ENCODE measurements at regions of chr2 and their contacts with region 1.

Region 1: GRCh38 chr2:191983186-191983585 is 136.3 kb upstream of the CAVIN2 start:
- DNase-seq: no peak
- ATAC-seq: no peak
- H3K4me3 ChIP-seq: no peak overlapping the region
- H3K27ac ChIP-seq: no peak overlapping the region
- H3K4me1 ChIP-seq: no peaks in the 10 kb centered on the region
- H3K27me3 ChIP-seq: no peaks in the 10 kb centered on the region; a peak in 1 of 4 replicates
- CTCF ChIP-seq: no peak
- EP300 ChIP-seq: no peak
- POLR2A ChIP-seq: no peak
- RAD21 ChIP-seq: no peak

Region 2: DNA sequence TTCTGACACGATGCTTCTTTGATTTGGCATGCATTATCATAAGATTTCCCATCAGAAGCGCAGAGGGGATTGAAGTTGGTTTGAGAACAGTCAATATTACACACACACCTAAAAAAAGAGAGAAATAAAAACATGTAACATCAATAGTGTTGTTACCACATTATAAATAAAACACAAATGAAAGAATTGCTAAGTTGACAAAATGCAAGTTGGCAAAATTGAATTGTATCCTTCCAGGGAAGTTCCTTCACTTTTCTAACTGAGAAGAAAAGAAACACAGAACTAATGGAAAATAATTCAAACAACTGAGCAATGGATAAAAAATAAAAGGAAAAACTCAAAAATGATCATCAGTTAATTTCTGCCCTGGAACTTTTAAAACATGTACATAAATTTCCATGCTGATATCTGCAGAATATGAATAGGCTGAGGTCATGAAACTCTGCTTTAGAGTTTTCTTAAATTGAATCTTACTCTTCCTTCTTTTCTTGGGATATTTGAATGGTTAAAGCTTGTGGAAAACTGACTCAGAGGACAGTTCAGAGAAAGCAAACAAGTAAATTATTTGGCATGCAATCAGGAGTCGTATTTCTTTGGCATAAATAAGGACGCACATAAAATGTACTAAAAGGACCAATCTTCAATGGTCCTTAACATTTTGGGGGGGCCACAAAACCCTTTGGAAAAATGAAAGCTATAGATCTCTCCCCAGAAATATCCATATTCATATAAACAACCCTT is 16.1 kb after region 1 on chr2:
- CTCF ChIA-PET with region 1: interaction called, 14 read pairs
- POLR2A ChIA-PET with region 1: no interaction called
- RAD21 ChIA-PET with region 1: interaction called, 5 read pairs
- SMC1A ChIA-PET with region 1: interaction called, 11 read pairs
- in situ Hi-C with region 1: no loop called
- intact Hi-C with region 1: no loop called
- DNase-seq: no peak
- ATAC-seq: no peak
- H3K4me3 ChIP-seq: no peak overlapping the region
- H3K27ac ChIP-seq: no peak overlapping the region
- H3K4me1 ChIP-seq: peaks cover 5% of the 10 kb centered on the region
- H3K27me3 ChIP-seq: no peaks in the 10 kb centered on the region
- CTCF ChIP-seq: no peak
- EP300 ChIP-seq: no peak
- POLR2A ChIP-seq: no peak
- RAD21 ChIP-seq: no peak

Region 3: GRCh38 chr2:192277494-192278109 is 294.4 kb after region 1 on chr2:
- CTCF ChIA-PET with region 1: no interaction called
- POLR2A ChIA-PET with region 1: no interaction called
- RAD21 ChIA-PET with region 1: no interaction called
- SMC1A ChIA-PET with region 1: no interaction called
- in situ Hi-C with region 1: no loop called
- intact Hi-C with region 1: no loop called
- DNase-seq: no peak
- ATAC-seq: no peak
- H3K4me3 ChIP-seq: no peak overlapping the region
- H3K27ac ChIP-seq: no peak overlapping the region
- H3K4me1 ChIP-seq: no peaks in the 10 kb centered on the region; the same call in 1 of the 2 replicates
- H3K27me3 ChIP-seq: no peaks in the 10 kb centered on the region
- CTCF ChIP-seq: no peak
- EP300 ChIP-seq: no peak
- POLR2A ChIP-seq: no peak
- RAD21 ChIP-seq: no peak

Measured in GM12878 (cell line).